ENCODE measurements at regions of chr6 and their contacts with region 1.

Region 1: GRCh38 chr6:125107896-125108295 is 45.7 kb upstream of the TPD52L1 start:
- DNase-seq: no peak
- H3K4me3 Mint-ChIP-seq: no peak overlapping the region
- H3K27ac Mint-ChIP-seq: no peak overlapping the region
- H3K4me1 Mint-ChIP-seq: no peaks in the 10 kb centered on the region
- H3K27me3 Mint-ChIP-seq: no peaks in the 10 kb centered on the region

Region 2: GRCh38 chr6:124870611-124871459 is 237.1 kb before region 1 on chr6:
- CTCF ChIA-PET with region 1: interaction called, 12 read pairs
- POLR2A ChIA-PET with region 1: no interaction called
- intact Hi-C with region 1: loop called (anchors 2 kb)
- DNase-seq: no peak
- H3K4me3 Mint-ChIP-seq: no peak overlapping the region
- H3K27ac Mint-ChIP-seq: no peak overlapping the region
- H3K4me1 Mint-ChIP-seq: no peaks in the 10 kb centered on the region
- H3K27me3 Mint-ChIP-seq: peaks cover 2% of the 10 kb centered on the region

Measured in activated CD4-positive, alpha-beta memory T cell treated with anti-CD3 and anti-CD28 coated beads for 36 hours (primary cell).